Sigmoid colon (tissue), 7 donors: ENCODE measurements at regions of chr16 and their contacts with region 1.

Region 1: GRCh38 chr16:813204-813915 is 12.8 kb upstream of the GNG13 start:
- DNase-seq: no peak
- H3K4me3 ChIP-seq: peak overlapping the region in 1 of 4 donors; percentile 22
- H3K27ac ChIP-seq: no peak overlapping the region
- H3K4me1 ChIP-seq: peaks cover 0 to 25% (median 17%) of the 10 kb centered on the region in 4 donors
- H3K27me3 ChIP-seq: peaks cover 29 to 67% (median 55%) of the 10 kb centered on the region in 3 donors
- CTCF ChIP-seq: peak in 3 of 4 experiments; percentile 22 to 57 (median 23)
- EP300 ChIP-seq: no peak
- POLR2A ChIP-seq: no peak

Region 2: GRCh38 chr16:842061-842476 is 28.7 kb after region 1 on chr16:
- intact Hi-C with region 1: no loop called
- DNase-seq: no peak
- H3K4me3 ChIP-seq: no peak overlapping the region
- H3K27ac ChIP-seq: no peak overlapping the region
- H3K4me1 ChIP-seq: no peaks in the 10 kb centered on the region
- H3K27me3 ChIP-seq: peaks cover 0 to 61% (median 13%) of the 10 kb centered on the region in 3 donors
- CTCF ChIP-seq: no peak
- EP300 ChIP-seq: no peak
- POLR2A ChIP-seq: no peak

Region 3: DNA sequence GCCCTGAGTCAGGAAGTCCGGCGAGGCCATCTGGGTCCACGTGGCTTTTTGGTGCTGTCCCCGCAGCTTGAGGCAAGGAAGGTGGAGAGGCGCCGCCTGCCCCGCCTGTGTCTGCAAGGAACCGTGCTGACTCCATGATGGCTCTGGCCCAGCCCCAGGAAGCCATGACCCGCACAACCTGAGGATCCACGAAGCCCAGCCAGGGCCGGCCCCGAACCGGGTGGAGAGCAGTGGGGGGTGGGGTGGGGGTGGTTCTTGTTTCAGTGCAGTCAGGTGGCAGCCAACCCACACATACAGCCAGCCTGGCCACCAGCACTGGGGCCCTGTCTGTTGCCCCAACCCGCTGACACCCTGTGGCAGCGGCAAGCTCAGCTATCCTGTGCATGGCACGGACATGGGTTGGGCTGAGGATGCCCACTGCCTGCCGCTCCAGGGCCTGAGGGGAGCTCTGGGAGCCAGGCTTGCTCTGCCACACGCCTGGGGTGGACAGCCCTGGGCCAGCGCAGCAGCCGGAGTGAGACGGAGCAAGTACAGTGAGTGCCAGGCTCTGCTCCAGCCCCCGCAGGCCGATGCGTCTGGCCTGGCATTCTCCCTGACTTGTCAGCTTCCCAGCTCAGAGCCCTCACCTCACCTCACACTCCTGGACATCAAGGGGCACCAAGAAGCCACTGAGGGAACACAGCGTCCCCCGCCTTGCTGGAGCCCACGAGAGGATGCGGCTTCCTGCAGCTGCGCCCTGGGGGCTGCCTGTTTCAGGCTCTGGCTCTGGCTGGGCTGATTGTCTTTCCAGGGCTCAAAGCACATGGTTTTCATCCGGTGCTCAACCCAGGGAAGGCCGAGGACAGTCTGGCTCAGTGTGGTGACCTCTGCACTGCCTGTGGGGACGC is 88.6 kb after region 1 on chr16:
- intact Hi-C with region 1: no loop called
- DNase-seq: no peak
- H3K4me3 ChIP-seq: no peak overlapping the region
- H3K27ac ChIP-seq: no peak overlapping the region
- H3K4me1 ChIP-seq: no peaks in the 10 kb centered on the region
- H3K27me3 ChIP-seq: no peaks in the 10 kb centered on the region
- CTCF ChIP-seq: no peak
- EP300 ChIP-seq: no peak
- POLR2A ChIP-seq: no peak

Region 4: DNA sequence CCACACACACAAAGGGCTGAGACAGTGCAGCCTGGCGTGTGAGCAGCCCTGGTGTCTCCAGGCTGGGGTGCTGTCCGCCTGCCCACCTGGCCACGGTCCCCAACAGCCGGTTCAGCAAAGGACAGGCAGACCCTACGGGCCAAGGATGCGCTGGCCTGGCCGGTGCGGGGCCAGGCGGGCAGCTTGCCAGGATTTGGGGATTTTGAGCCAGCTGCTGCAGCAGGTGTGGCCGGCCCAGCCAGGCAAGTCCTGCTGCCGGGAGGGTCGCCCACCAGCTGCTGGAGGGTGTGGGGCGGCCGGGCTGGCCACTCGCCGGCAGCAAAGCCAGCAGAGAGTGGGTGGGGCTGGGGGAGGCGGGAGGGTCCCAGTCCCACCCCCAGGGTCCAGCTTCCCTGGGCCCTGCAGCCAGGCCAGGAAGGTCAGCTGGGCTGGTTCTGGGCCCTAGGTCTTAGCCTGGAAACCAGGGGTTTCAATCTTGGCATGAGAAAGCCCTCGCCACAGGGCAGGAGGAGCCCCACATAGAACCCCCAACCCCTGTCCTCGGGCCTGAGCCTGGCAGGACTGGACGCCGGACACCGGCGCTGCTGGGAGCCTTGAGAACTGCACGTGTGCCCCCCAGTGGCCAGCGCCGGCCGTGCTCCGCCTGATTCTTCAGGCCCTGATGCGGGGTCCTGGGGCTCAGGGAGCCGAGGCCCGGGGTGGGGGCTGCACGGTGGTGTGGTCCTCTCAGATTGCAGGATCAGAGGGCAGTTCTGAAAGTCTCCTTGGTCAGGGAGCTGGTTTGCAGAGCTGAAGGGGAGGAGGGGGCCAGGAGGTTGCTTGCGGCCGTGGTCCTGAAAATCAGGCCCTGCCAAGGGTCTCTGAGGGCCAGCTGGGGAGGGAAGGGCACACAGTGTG is 241.5 kb after region 1 on chr16:
- intact Hi-C with region 1: loop called (anchors 2 kb)
- DNase-seq: no peak
- H3K4me3 ChIP-seq: no peak overlapping the region
- H3K27ac ChIP-seq: no peak overlapping the region
- H3K4me1 ChIP-seq: peaks cover 0 to 6% (median 3%) of the 10 kb centered on the region in 4 donors
- H3K27me3 ChIP-seq: peaks cover 20 to 54% (median 26%) of the 10 kb centered on the region in 3 donors
- CTCF ChIP-seq: peak; percentile 33 to 84 (median 79)
- EP300 ChIP-seq: no peak
- POLR2A ChIP-seq: no peak

Region 5: GRCh38 chr16:1105888-1106620 is 292.7 kb after region 1 on chr16:
- intact Hi-C with region 1: loop called (anchors 2 kb)
- DNase-seq: peak; percentile 86
- H3K4me3 ChIP-seq: no peak overlapping the region
- H3K27ac ChIP-seq: no peak overlapping the region
- H3K4me1 ChIP-seq: peaks cover 0 to 23% (median 19%) of the 10 kb centered on the region in 4 donors
- H3K27me3 ChIP-seq: peaks cover 13 to 51% (median 26%) of the 10 kb centered on the region in 3 donors
- CTCF ChIP-seq: peak; percentile 58 to 92 (median 76)
- EP300 ChIP-seq: no peak
- POLR2A ChIP-seq: no peak

Region 6: DNA sequence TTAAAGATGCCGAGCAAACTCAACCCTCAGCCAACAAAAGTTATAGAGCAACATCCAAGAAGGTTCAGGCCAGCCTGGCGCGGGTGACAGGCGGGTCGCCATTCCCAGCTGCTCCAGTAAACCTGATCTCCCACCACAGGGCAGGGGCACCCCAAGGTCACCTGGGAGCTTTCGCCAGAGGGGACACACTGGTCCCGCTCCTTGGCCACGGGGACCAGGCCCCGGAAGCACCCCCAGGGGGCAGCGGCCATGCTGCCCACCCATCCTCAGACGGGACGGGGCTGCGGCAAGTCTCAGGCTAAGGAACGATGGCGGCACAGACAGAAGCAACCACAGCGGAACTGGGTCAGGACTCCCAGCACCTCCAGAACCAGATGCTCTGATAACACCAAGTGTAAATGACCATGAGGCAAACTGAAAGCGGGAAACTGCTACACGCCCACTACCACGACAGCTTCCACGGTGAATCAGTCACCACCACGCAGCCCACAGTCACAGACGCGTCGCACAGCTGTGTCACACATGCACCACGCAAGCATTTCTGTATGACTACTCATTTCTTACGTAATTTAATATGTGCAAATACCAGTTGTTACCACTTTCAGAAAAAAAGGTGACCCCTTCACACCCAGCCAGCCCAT is 645.1 kb after region 1 on chr16:
- intact Hi-C with region 1: no loop called
- DNase-seq: no peak
- H3K4me3 ChIP-seq: no peak overlapping the region
- H3K27ac ChIP-seq: no peak overlapping the region
- H3K4me1 ChIP-seq: peaks cover 0 to 21% (median 9%) of the 10 kb centered on the region in 4 donors
- H3K27me3 ChIP-seq: no peaks in the 10 kb centered on the region
- CTCF ChIP-seq: no peak
- EP300 ChIP-seq: no peak
- POLR2A ChIP-seq: no peak